ENCODE measurements at regions of chr11 and their contacts with region 1.

Region 1: GRCh38 chr11:123195188-123196059 is at the start of gene CLMP:
- DNase-seq: peak; percentile 71 to 73
- H3K4me3 ChIP-seq: peak within 1 kb of the TSS; percentile 58
- H3K4me3 Mint-ChIP-seq: peak within 1 kb of the TSS; percentile 75
- H3K27ac Mint-ChIP-seq: peak within 1 kb of the TSS; percentile 43
- H3K4me1 ChIP-seq: peaks cover 21% of the 10 kb centered on the region
- H3K4me1 Mint-ChIP-seq: peaks cover 17% of the 10 kb centered on the region
- H3K27me3 ChIP-seq: no peaks in the 10 kb centered on the region
- H3K27me3 Mint-ChIP-seq: peaks cover 5% of the 10 kb centered on the region
- CTCF ChIP-seq: no peak
- total RNA-seq, gene CLMP: 44.0 and 58.9 TPM in 2 replicates

Region 2: GRCh38 chr11:123166071-123166559 is 29.3 kb before region 1 on chr11:
- CTCF ChIA-PET with region 1: interaction called, 3 read pairs
- POLR2A ChIA-PET with region 1: interaction called, 3 read pairs
- intact Hi-C with region 1: loop called (anchors 2 kb)
- DNase-seq: peak; percentile 79 to 84
- H3K4me3 ChIP-seq: no peak overlapping the region
- H3K4me3 Mint-ChIP-seq: no peak overlapping the region
- H3K27ac Mint-ChIP-seq: peak overlapping the region; percentile 33
- H3K4me1 ChIP-seq: no peaks in the 10 kb centered on the region
- H3K4me1 Mint-ChIP-seq: peaks cover 10% of the 10 kb centered on the region
- H3K27me3 ChIP-seq: no peaks in the 10 kb centered on the region
- H3K27me3 Mint-ChIP-seq: no peaks in the 10 kb centered on the region
- CTCF ChIP-seq: peak; percentile 80 to 90

Region 3: DNA sequence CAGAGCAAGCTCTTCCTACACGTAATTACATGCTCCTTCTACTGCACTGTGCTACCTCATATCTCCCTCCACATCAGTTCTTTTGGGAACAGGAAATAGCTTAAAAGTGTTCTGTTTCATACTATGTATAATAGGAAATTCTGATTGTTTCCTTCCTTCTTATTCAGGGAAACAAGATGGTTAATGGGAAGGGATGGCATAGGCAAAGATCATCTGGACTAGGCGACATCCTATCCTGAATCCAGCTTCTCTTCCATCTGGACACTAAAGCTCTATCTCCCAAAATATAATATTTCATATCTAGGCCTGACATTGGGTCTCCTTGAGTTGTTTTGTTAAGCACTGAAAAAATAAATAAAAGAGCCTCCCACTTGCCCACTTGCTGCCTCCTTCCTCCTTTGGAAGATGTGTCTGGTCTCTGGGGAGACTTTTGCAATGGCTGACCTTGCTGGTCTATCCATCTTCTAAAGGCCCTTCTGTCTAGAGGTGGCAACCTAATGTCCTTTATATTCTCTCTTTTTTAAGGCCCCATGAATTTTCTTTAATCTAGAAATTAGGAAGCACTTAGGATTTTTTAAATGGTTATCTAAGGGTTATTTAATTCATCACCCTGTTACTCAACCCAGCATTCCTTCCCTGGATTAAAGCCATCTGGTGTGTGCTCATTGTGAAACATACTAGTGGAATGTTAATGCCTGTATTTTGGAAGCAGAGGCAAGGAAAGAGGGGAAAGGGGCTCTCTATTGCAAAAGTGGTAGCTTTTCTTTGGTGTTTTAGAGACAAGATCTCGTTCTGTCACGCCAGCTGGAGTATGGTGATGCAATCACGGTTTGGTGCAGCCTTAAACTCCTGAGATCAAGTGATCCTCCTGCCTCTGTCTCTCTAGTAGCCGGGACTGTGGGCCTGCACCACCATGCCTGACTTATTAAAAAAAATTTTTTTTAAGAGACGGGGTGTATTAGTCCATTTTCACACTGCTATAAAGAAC is 20.9 kb before region 1 on chr11:
- CTCF ChIA-PET with region 1: interaction called, 3 read pairs
- POLR2A ChIA-PET with region 1: interaction called, 7 read pairs
- intact Hi-C with region 1: loop called (anchors 2 kb)
- DNase-seq: peak; percentile 69 to 78
- H3K4me3 ChIP-seq: no peak overlapping the region
- H3K4me3 Mint-ChIP-seq: no peak overlapping the region
- H3K27ac Mint-ChIP-seq: peak overlapping the region; percentile 91
- H3K4me1 ChIP-seq: peaks cover 18% of the 10 kb centered on the region
- H3K4me1 Mint-ChIP-seq: peaks cover 13% of the 10 kb centered on the region
- H3K27me3 ChIP-seq: no peaks in the 10 kb centered on the region
- H3K27me3 Mint-ChIP-seq: no peaks in the 10 kb centered on the region
- CTCF ChIP-seq: no peak

Region 4: DNA sequence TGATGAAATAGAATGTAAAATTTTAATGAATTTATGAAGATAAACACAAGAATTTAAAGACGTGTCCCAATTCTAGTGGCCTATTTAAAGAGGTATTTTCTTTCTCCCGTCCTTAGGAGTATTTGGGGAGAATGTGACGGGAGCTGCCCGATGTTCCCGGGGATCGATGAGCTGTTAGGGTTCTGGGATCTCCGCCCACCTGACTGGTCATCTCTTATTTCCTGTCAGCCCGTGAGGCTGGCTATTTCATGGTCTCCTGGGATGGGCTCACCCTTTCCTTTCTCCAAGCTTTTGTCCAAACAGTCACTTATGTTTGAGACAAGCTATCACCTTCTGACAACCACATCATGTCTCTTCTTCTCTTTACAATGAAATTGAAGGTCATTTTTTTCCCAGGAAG is 16.6 kb after region 1 on chr11:
- CTCF ChIA-PET with region 1: no interaction called
- POLR2A ChIA-PET with region 1: interaction called, 4 read pairs
- intact Hi-C with region 1: loop called (anchors 2 kb)
- DNase-seq: no peak
- H3K4me3 ChIP-seq: no peak overlapping the region
- H3K4me3 Mint-ChIP-seq: no peak overlapping the region
- H3K27ac Mint-ChIP-seq: no peak overlapping the region
- H3K4me1 ChIP-seq: peaks cover 14% of the 10 kb centered on the region
- H3K4me1 Mint-ChIP-seq: peaks cover 24% of the 10 kb centered on the region
- H3K27me3 ChIP-seq: no peaks in the 10 kb centered on the region
- H3K27me3 Mint-ChIP-seq: no peaks in the 10 kb centered on the region
- CTCF ChIP-seq: no peak